Transverse colon (tissue), 4 donors: ENCODE measurements at regions of chr17 and their contacts with region 1.

Region 1: GRCh38 chr17:28902819-28903545 is at the start of gene DHRS13:
- DNase-seq: peak; percentile 95
- H3K4me3 ChIP-seq: peak within 1 kb of the TSS; percentile 46 to 73 (median 71)
- H3K27ac ChIP-seq: peak within 1 kb of the TSS; percentile 89 to 95 (median 92)
- H3K4me1 ChIP-seq: peaks cover 11 to 34% (median 27%) of the 10 kb centered on the region in 4 donors
- H3K27me3 ChIP-seq: no peaks in the 10 kb centered on the region
- CTCF ChIP-seq: peak; percentile 71 to 89 (median 78)
- EP300 ChIP-seq: no peak
- POLR2A ChIP-seq: no peak
- total RNA-seq, gene DHRS13: 2.2 to 6.5 (median 6.0) TPM

Region 2: GRCh38 chr17:28951991-28952975 is 49.3 kb after region 1 on chr17:
- in situ Hi-C with region 1: no loop called
- intact Hi-C with region 1: loop called (anchors 5 kb)
- DNase-seq: peak; percentile 98
- H3K4me3 ChIP-seq: peak overlapping the region; percentile 52 to 99 (median 70)
- H3K27ac ChIP-seq: peak overlapping the region; percentile 98 to 99 (median 98)
- H3K4me1 ChIP-seq: peaks cover 11 to 25% (median 21%) of the 10 kb centered on the region in 4 donors
- H3K27me3 ChIP-seq: no peaks in the 10 kb centered on the region
- CTCF ChIP-seq: peak in 1 of 5 experiments; percentile 17
- EP300 ChIP-seq: no peak
- POLR2A ChIP-seq: peak; percentile 80

Region 3: GRCh38 chr17:29205047-29205446 is 302.1 kb after region 1 on chr17:
- in situ Hi-C with region 1: no loop called
- intact Hi-C with region 1: no loop called
- DNase-seq: no peak
- H3K4me3 ChIP-seq: no peak overlapping the region
- H3K27ac ChIP-seq: no peak overlapping the region
- H3K4me1 ChIP-seq: no peaks in the 10 kb centered on the region
- H3K27me3 ChIP-seq: no peaks in the 10 kb centered on the region
- CTCF ChIP-seq: no peak
- EP300 ChIP-seq: no peak
- POLR2A ChIP-seq: no peak

Region 4: GRCh38 chr17:29331708-29332085 is 428.7 kb after region 1 on chr17:
- in situ Hi-C with region 1: no loop called
- intact Hi-C with region 1: no loop called
- DNase-seq: no peak
- H3K4me3 ChIP-seq: no peak overlapping the region
- H3K27ac ChIP-seq: peak overlapping the region in 3 of 4 donors; percentile 50 to 63 (median 59)
- H3K4me1 ChIP-seq: peaks cover 0 to 12% (median 5%) of the 10 kb centered on the region in 4 donors
- H3K27me3 ChIP-seq: no peaks in the 10 kb centered on the region
- CTCF ChIP-seq: no peak
- EP300 ChIP-seq: no peak
- POLR2A ChIP-seq: no peak